ENCODE measurements at regions of chr13 and their contacts with region 1.

Region 1: GRCh38 chr13:51590971-51591627 is 6.8 kb downstream of the WDFY2 start:
- DNase-seq: peak; percentile 7 to 26
- ATAC-seq: peak; percentile 81 to 94
- H3K4me3 ChIP-seq: no peak overlapping the region
- H3K27ac ChIP-seq: peak overlapping the region in 2 of 4 donors; percentile 5 to 28
- H3K4me1 ChIP-seq: peaks cover 7 to 13% of the 10 kb centered on the region in 2 donors
- H3K27me3 ChIP-seq: no peaks in the 10 kb centered on the region
- CTCF ChIP-seq: no peak
- POLR2A ChIP-seq: no peak

Region 2: DNA sequence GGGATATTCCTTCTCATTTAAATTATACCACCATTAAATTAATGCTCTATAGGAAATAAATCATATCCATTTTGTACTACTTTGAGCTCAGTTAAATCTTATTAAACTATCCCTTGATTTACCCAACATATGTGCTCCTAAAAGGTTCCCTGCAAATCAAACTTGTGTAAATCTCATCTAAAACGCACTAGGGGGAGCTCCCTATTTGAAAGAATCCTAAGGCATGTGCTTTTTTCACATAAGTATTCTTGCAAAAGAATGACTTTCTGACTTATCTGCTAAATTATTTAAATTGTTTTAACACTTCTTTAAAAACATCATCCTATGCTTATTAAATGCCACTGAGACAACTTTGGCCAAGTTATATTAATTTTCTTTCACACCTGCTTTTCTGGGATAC is 146.2 kb before region 1 on chr13:
- in situ Hi-C with region 1: loop called in 1 of 4 experiments (anchors 10 kb)
- intact Hi-C with region 1: no loop called
- DNase-seq: no peak
- ATAC-seq: no peak
- H3K4me3 ChIP-seq: no peak overlapping the region
- H3K27ac ChIP-seq: no peak overlapping the region
- H3K4me1 ChIP-seq: peaks cover 8 to 16% of the 10 kb centered on the region in 2 donors
- H3K27me3 ChIP-seq: no peaks in the 10 kb centered on the region
- CTCF ChIP-seq: no peak
- POLR2A ChIP-seq: no peak